OCI-LY7 (cell line): ENCODE measurements at regions of chr3 and their contacts with region 1.

Region 1: GRCh38 chr3:150721285-150722130 is 17.8 kb upstream of the ERICH6 start:
- DNase-seq: peak; percentile 76
- H3K4me3 ChIP-seq: no peak overlapping the region
- H3K27ac ChIP-seq: no peak overlapping the region
- H3K4me1 ChIP-seq: peaks cover 11% of the 10 kb centered on the region
- CTCF ChIP-seq: peak; percentile 95

Region 2: DNA sequence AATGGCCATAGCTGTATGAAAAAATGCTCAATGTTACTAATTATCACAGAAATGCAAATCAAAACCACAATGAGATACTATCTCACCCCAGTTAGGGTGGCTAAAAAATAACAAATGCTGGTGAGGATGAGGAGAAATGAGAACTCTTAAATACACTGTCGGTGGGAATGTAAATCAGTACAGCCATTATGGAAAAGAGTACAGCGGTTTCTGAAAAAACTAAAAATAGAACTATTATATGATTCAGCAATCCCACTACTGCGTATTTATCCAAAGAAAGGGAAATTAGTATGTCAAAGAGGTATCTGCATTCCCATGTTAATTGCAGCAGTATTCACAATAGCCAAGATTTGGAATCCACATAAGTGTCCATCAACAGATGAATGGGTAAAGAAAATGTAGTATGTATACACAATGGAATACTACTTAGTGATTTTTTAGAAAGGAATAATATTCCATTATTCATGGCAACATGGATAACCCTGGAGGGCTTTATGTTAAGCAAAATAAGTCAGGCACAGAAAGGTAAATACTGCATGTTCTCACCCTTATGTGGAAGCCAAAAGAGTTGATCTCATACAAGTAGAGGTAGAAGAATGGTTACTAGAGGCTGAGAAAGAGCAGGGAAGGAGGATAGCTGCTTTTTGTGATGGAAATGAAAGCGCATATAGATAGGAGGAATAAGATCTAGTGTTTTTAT is 210.2 kb before region 1 on chr3:
- CTCF ChIA-PET with region 1: no interaction called
- POLR2A ChIA-PET with region 1: no interaction called
- intact Hi-C with region 1: no loop called
- DNase-seq: no peak
- H3K4me3 ChIP-seq: no peak overlapping the region
- H3K27ac ChIP-seq: no peak overlapping the region
- H3K4me1 ChIP-seq: no peaks in the 10 kb centered on the region
- CTCF ChIP-seq: no peak

Region 3: GRCh38 chr3:150528354-150528797 is 193.1 kb before region 1 on chr3:
- CTCF ChIA-PET with region 1: no interaction called
- POLR2A ChIA-PET with region 1: no interaction called
- intact Hi-C with region 1: loop called (anchors 1 kb)
- DNase-seq: peak; percentile 38
- H3K4me3 ChIP-seq: no peak overlapping the region
- H3K27ac ChIP-seq: no peak overlapping the region
- H3K4me1 ChIP-seq: no peaks in the 10 kb centered on the region
- CTCF ChIP-seq: peak; percentile 80

Region 4: DNA sequence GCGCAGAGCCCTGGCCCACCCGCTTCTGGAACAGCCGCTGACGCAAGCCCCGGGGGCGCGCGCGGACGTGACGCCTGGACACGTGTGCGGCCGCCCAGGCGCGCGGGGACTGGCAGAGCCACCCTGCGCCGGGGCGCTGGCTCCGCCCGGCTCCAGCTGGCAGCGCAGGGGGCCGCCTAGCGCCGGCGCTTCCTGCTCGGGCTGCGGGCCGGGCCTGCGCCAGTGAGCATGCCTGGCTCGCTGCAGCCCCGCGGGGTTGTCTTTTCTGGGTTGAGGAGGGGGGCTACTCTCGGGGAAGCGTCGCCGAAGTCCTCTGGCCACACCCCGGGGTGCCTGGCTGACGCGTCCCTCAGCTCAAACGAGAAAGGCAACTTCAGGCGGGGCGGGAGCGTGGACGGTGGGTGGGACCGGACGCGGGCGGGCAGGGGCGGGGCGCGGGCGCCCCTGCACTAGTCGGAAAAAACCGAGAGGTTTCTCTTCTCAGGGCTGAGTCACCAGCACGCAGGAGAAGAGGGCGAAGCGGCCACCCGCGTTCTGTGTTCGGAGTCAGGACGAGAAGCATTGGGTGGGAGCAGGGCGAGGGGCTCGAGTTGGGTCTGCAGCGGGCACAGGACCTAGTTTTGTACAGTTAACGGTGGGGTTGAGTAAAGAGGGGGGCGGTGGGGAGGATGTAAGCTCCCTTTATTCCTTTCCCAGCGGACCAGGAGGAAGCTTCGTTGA is 41.8 kb after region 1 on chr3 and contains the start of gene SIAH2:
- CTCF ChIA-PET with region 1: interaction called, 4 read pairs
- POLR2A ChIA-PET with region 1: interaction called, 7 read pairs
- intact Hi-C with region 1: loop called (anchors 5 kb)
- DNase-seq: peak; percentile 92
- H3K4me3 ChIP-seq: peak within 1 kb of the TSS; percentile 78
- H3K27ac ChIP-seq: peak within 1 kb of the TSS; percentile 58
- H3K4me1 ChIP-seq: peaks cover 71% of the 10 kb centered on the region
- CTCF ChIP-seq: no peak
- total RNA-seq, gene SIAH2: 22.2 and 22.7 TPM in 2 replicates

Region 5: GRCh38 chr3:150787741-150788370 is 66.3 kb after region 1 on chr3:
- CTCF ChIA-PET with region 1: no interaction called
- POLR2A ChIA-PET with region 1: interaction called, 4 read pairs
- intact Hi-C with region 1: loop called (anchors 2 kb)
- DNase-seq: peak; percentile 76
- H3K4me3 ChIP-seq: no peak overlapping the region
- H3K27ac ChIP-seq: no peak overlapping the region
- H3K4me1 ChIP-seq: no peaks in the 10 kb centered on the region
- CTCF ChIP-seq: peak; percentile 98

Region 6: GRCh38 chr3:150830094-150830681 is 108.7 kb after region 1 on chr3:
- CTCF ChIA-PET with region 1: interaction called, 5 read pairs
- POLR2A ChIA-PET with region 1: no interaction called
- intact Hi-C with region 1: loop called (anchors 10 kb)
- DNase-seq: peak; percentile 26
- H3K4me3 ChIP-seq: no peak overlapping the region
- H3K27ac ChIP-seq: no peak overlapping the region
- H3K4me1 ChIP-seq: no peaks in the 10 kb centered on the region
- CTCF ChIP-seq: peak; percentile 74

Region 7: GRCh38 chr3:150870396-150870795 is 148.9 kb after region 1 on chr3:
- CTCF ChIA-PET with region 1: no interaction called
- POLR2A ChIA-PET with region 1: interaction called, 3 read pairs
- intact Hi-C with region 1: loop called (anchors 1 kb)
- DNase-seq: no peak
- H3K4me3 ChIP-seq: no peak overlapping the region
- H3K27ac ChIP-seq: no peak overlapping the region
- H3K4me1 ChIP-seq: no peaks in the 10 kb centered on the region
- CTCF ChIP-seq: no peak

Region 8: DNA sequence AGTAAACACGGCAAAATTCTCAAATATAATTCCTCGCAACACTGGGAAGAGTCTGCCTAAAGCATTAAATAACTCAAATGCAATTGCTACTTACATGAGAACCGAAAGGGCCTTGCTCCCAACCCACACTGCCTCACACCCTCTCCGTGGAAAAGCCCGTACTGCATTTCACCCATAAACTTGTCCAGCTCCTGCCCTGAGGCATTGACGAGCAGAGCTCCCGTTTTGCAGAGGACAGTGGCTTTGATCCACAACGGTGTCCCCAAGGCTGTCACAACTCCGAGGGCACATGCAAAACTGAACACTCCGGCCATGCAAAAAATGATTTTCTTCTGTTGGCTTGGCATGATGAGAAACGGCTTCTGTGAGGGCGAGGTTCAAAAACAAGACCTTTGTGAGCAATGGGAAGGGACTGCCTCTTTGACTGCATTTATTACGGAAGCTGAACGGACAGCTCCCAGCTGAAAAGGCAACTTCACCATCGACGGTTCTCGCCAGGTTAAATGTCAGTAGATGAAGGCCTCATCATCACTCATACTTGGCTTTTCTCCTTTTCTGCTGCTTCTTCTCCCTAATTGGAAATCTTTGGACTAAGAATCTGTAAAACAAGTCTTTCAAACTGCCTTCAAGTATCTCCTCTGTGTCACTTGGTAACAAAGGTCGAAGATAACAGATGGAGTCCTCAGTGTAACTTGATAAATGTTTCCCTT is 251.0 kb after region 1 on chr3 and contains the start of gene CLRN1:
- CTCF ChIA-PET with region 1: no interaction called
- POLR2A ChIA-PET with region 1: no interaction called
- intact Hi-C with region 1: no loop called
- DNase-seq: no peak
- H3K4me3 ChIP-seq: no peak within 1 kb of the TSS
- H3K27ac ChIP-seq: no peak within 1 kb of the TSS
- H3K4me1 ChIP-seq: no peaks in the 10 kb centered on the region
- CTCF ChIP-seq: no peak
- total RNA-seq, gene CLRN1: not detected in 2 replicates

Region 9: GRCh38 chr3:151146071-151146730 is 424.7 kb after region 1 on chr3:
- CTCF ChIA-PET with region 1: no interaction called
- POLR2A ChIA-PET with region 1: no interaction called
- intact Hi-C with region 1: loop called (anchors 1 kb)
- DNase-seq: peak; percentile 83
- H3K4me3 ChIP-seq: peak overlapping the region; percentile 10
- H3K27ac ChIP-seq: no peak overlapping the region
- H3K4me1 ChIP-seq: peaks cover 12% of the 10 kb centered on the region
- CTCF ChIP-seq: peak; percentile 96